Colonic mucosa (tissue), 4 donors: ENCODE measurements at regions of chr17 and their contacts with region 1.

Region 1: GRCh38 chr17:58417300-58418092 is at the start of gene RNF43:
- DNase-seq: peak; percentile 98
- H3K4me3 ChIP-seq: peak within 1 kb of the TSS; percentile 36
- H3K27ac ChIP-seq: peak within 1 kb of the TSS; percentile 66
- H3K4me1 ChIP-seq: peaks cover 3% of the 10 kb centered on the region
- H3K27me3 ChIP-seq: no peaks in the 10 kb centered on the region
- CTCF ChIP-seq: peak; percentile 56
- total RNA-seq, gene RNF43: 38.5 to 51.2 TPM

Region 2: DNA sequence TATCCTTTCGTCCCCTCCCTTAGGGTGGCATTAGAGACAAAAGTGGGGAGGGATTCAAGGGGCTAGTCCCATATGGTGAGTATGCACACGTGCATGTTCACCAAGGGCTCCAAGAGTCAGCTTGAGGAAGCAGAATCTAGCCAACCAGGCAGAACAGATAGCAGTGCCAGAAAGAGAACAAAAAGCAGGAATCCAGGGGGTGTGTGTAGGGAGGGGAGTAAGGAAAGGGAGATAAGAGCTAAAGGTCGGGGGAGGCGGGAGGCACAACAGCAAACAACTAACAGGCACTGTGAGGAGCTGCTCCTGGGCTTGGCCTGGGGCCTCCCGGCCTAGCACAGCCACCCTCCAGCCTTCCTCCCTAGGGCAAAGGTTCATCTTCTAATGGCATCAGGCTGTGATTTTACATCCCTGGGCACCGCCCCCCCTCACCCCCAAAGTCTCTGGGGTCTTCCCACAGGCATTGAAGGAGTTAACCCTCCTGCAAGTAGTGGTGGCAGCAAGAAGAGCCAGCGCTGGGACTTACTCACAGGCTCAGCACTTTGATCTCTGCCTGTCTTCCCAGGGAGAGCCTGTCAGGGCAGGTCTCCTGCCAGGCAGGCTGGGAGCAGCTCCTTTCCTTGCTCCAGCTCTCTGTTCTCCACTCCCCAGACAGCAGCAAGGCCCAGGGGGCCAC is 53.1 kb before region 1 on chr17:
- intact Hi-C with region 1: loop called (anchors 10 kb)
- DNase-seq: peak; percentile 78
- H3K4me3 ChIP-seq: no peak overlapping the region
- H3K27ac ChIP-seq: peak overlapping the region; percentile 69
- H3K4me1 ChIP-seq: peaks cover 10% of the 10 kb centered on the region
- H3K27me3 ChIP-seq: no peaks in the 10 kb centered on the region
- CTCF ChIP-seq: no peak